ENCODE measurements at regions of chr11 and their contacts with region 1.

Region 1: GRCh38 chr11:95715777-95716241 is 73.8 kb downstream of the FAM76B start:
- DNase-seq: peak; percentile 89
- ATAC-seq: peak; percentile 84
- H3K4me3 ChIP-seq: no peak overlapping the region
- H3K27ac ChIP-seq: no peak overlapping the region
- H3K4me1 ChIP-seq: peaks cover 26% of the 10 kb centered on the region
- H3K27me3 ChIP-seq: no peaks in the 10 kb centered on the region
- CTCF ChIP-seq: no peak
- EP300 ChIP-seq: peak; percentile 87 to 89; a peak in 3 of 4 replicates
- POLR2A ChIP-seq: no peak
- RAD21 ChIP-seq: no peak

Region 2: DNA sequence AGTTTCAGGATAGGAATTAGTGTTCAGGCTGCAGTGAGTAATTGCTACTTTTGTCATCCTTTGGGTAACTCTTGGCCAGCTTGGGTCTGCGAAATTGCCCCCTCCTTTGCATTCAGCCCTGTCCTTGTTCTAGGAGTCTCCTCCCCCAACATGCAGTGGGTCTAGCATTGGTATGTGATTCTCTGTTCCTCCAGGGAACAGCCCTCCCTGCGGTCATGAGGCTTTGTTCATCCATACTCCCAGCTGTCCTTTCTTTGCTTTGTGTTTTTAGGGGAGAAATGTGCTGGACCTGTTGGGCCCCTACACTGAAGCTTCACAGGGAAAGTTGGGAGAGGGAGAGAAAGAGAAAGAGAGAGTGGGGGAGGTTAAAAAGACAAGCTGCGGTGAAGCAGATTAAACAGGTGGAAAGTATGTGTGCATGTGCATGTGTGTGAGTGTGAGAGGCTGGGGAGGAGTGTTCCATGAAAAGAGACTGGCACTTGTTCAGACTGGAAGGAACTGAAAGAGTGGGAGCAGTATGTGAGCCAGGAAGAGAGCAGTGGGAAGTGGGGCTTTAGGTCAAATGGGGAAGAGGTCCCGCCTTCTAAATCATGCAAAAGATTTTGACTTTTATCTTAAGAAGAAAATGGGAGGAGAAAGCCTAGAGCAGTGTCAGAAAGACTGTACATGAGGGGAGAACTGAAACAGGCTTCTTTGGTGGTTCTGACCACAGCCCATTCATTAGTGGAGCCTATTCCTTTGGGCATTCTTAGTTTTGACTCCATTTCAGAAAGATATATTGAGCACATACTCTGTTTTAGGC is 466.9 kb before region 1 on chr11:
- CTCF ChIA-PET with region 1: interaction called, 3 read pairs
- POLR2A ChIA-PET with region 1: interaction called, 7 read pairs
- RAD21 ChIA-PET with region 1: interaction called, 18 read pairs
- SMC1A ChIA-PET with region 1: interaction called, 17 read pairs
- in situ Hi-C with region 1: no loop called
- intact Hi-C with region 1: no loop called
- DNase-seq: peak; percentile 74
- ATAC-seq: peak; percentile 85
- H3K4me3 ChIP-seq: peak overlapping the region; percentile 41; the same call in 1 of the 2 replicates
- H3K27ac ChIP-seq: peak overlapping the region; percentile 63
- H3K4me1 ChIP-seq: peaks cover 35% of the 10 kb centered on the region
- H3K27me3 ChIP-seq: no peaks in the 10 kb centered on the region
- CTCF ChIP-seq: no peak
- EP300 ChIP-seq: peak in 1 of 2 experiments; percentile 73; a peak in 1 of 4 replicates
- POLR2A ChIP-seq: no peak
- RAD21 ChIP-seq: no peak

Region 3: GRCh38 chr11:95556342-95557163 is 159.3 kb before region 1 on chr11:
- CTCF ChIA-PET with region 1: interaction called, 4 read pairs
- POLR2A ChIA-PET with region 1: interaction called, 3 read pairs
- RAD21 ChIA-PET with region 1: interaction called, 21 read pairs
- SMC1A ChIA-PET with region 1: interaction called, 13 read pairs
- in situ Hi-C with region 1: no loop called
- intact Hi-C with region 1: loop called (anchors 1 kb)
- DNase-seq: peak; percentile 75
- ATAC-seq: peak; percentile 91
- H3K4me3 ChIP-seq: peak overlapping the region; percentile 22; the same call in 1 of the 2 replicates
- H3K27ac ChIP-seq: peak overlapping the region; percentile 86
- H3K4me1 ChIP-seq: peaks cover 21% of the 10 kb centered on the region
- H3K27me3 ChIP-seq: no peaks in the 10 kb centered on the region
- CTCF ChIP-seq: no peak
- EP300 ChIP-seq: peak; percentile 88 to 89
- POLR2A ChIP-seq: no peak
- RAD21 ChIP-seq: no peak

Region 4: GRCh38 chr11:95567685-95568084 is 148.1 kb before region 1 on chr11:
- CTCF ChIA-PET with region 1: no interaction called
- POLR2A ChIA-PET with region 1: no interaction called
- RAD21 ChIA-PET with region 1: no interaction called
- SMC1A ChIA-PET with region 1: no interaction called
- in situ Hi-C with region 1: no loop called
- intact Hi-C with region 1: no loop called
- DNase-seq: no peak
- ATAC-seq: no peak
- H3K4me3 ChIP-seq: no peak overlapping the region
- H3K27ac ChIP-seq: no peak overlapping the region
- H3K4me1 ChIP-seq: no peaks in the 10 kb centered on the region
- H3K27me3 ChIP-seq: no peaks in the 10 kb centered on the region
- CTCF ChIP-seq: no peak
- EP300 ChIP-seq: no peak
- POLR2A ChIP-seq: no peak
- RAD21 ChIP-seq: no peak

Region 5: DNA sequence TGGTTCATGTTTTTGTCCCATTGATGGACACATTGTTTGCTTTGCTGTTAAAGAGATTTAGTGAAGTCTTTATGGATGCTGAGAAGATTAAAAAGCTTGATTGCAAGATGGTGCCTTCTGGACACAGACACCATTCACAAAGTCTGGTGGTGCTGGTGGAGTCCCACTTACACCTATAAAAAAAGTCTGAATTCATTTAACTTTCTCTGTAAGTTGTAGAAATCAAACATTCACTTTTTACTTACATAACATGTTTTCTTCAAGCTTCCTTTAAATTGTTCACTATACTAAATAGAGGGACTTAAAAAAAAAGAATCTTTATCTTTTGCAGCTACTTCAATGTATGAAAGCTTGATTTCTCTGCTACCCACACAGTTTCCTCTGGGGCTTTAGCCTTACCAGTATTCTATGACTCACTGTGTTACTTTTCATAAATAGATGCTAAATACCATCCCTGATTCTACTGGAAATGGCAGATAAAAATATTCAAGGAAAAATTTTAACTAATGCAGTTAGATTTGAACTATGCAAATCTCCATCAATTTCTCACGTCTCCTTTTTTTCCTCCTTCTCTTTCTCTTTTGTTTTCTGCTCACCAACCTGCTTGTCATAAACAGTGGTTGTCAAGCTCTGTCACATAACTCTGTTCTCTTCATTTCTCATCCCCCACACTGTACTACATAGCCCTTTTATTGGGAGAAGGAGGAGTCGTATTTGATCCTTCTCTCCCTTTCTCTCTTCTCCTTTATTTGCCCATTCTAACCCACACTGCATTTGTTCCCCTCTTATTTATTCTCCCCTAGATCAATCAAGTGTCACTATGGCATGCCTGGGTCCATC is 16.0 kb before region 1 on chr11:
- CTCF ChIA-PET with region 1: interaction called, 53 read pairs
- POLR2A ChIA-PET with region 1: interaction called, 13 read pairs
- RAD21 ChIA-PET with region 1: interaction called, 114 read pairs
- SMC1A ChIA-PET with region 1: interaction called, 110 read pairs
- in situ Hi-C with region 1: no loop called
- intact Hi-C with region 1: no loop called
- DNase-seq: no peak
- ATAC-seq: peak; percentile 73
- H3K4me3 ChIP-seq: peak overlapping the region; percentile 30; the same call in 1 of the 2 replicates
- H3K27ac ChIP-seq: peak overlapping the region; percentile 15; the same call in 1 of the 2 replicates
- H3K4me1 ChIP-seq: peaks cover 18% of the 10 kb centered on the region
- H3K27me3 ChIP-seq: no peaks in the 10 kb centered on the region
- CTCF ChIP-seq: no peak
- EP300 ChIP-seq: 0 out of 4 replicates have a peak, but pooled peaks of 1 of the 2 experiments have one; percentile 13
- POLR2A ChIP-seq: no peak
- RAD21 ChIP-seq: no peak

Region 6: GRCh38 chr11:95764267-95764898 is 48.6 kb after region 1 on chr11:
- CTCF ChIA-PET with region 1: interaction called, 172 read pairs
- POLR2A ChIA-PET with region 1: interaction called, 5 read pairs
- RAD21 ChIA-PET with region 1: interaction called, 12 read pairs
- SMC1A ChIA-PET with region 1: interaction called, 203 read pairs
- in situ Hi-C with region 1: no loop called
- intact Hi-C with region 1: no loop called
- DNase-seq: no peak
- ATAC-seq: peak; percentile 91
- H3K4me3 ChIP-seq: no peak overlapping the region
- H3K27ac ChIP-seq: no peak overlapping the region
- H3K4me1 ChIP-seq: no peaks in the 10 kb centered on the region
- H3K27me3 ChIP-seq: no peaks in the 10 kb centered on the region
- CTCF ChIP-seq: peak; percentile 43 to 66 (median 46); a peak in 5 of 6 replicates
- EP300 ChIP-seq: no peak
- POLR2A ChIP-seq: no peak
- RAD21 ChIP-seq: peak; percentile 83

Region 7: DNA sequence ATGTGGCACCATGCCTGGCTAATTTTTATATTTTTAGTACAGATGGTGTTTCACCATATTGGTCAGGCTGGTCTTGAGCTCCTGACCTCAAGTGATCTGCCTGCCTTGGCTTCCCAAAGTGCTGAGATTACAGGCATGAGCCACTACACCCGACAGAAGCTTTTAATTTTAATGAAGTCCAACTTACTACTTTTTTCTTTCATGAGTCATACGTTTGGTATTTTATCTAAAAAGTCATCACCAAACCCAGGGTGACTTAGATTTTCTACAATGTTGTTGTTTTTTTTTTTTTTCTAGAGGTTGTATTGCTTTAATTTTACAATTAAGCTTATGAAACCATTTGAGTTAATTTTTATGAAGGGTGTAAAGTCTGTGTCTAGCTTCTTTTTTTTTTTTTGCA is 708.9 kb after region 1 on chr11:
- CTCF ChIA-PET with region 1: no interaction called
- POLR2A ChIA-PET with region 1: no interaction called
- RAD21 ChIA-PET with region 1: no interaction called
- SMC1A ChIA-PET with region 1: interaction called, 3 read pairs
- in situ Hi-C with region 1: no loop called
- intact Hi-C with region 1: loop called (anchors 10 kb)
- DNase-seq: no peak
- ATAC-seq: no peak
- H3K4me3 ChIP-seq: no peak overlapping the region
- H3K27ac ChIP-seq: no peak overlapping the region
- H3K4me1 ChIP-seq: no peaks in the 10 kb centered on the region
- H3K27me3 ChIP-seq: no peaks in the 10 kb centered on the region
- CTCF ChIP-seq: no peak
- EP300 ChIP-seq: no peak
- POLR2A ChIP-seq: no peak
- RAD21 ChIP-seq: no peak

Measured in GM12878 (cell line).